ENCODE measurements at regions of chr10 and their contacts with region 1.

Region 1: GRCh38 chr10:6401562-6402348 is 178.3 kb downstream of the PRKCQ start:
- DNase-seq: peak; percentile 71
- ATAC-seq: peak; percentile 83
- H3K4me3 Mint-ChIP-seq: peak overlapping the region; percentile 1
- H3K27ac Mint-ChIP-seq: no peak overlapping the region
- H3K4me1 Mint-ChIP-seq: peaks cover 37% of the 10 kb centered on the region
- H3K27me3 Mint-ChIP-seq: peaks cover 4% of the 10 kb centered on the region
- CTCF ChIP-seq: peak; percentile 67

Region 2: GRCh38 chr10:6128591-6129251 is 273.0 kb before region 1 on chr10:
- CTCF ChIA-PET with region 1: interaction called, 10 read pairs
- POLR2A ChIA-PET with region 1: no interaction called
- intact Hi-C with region 1: no loop called
- DNase-seq: no peak
- ATAC-seq: no peak
- H3K4me3 Mint-ChIP-seq: no peak overlapping the region
- H3K27ac Mint-ChIP-seq: no peak overlapping the region
- H3K4me1 Mint-ChIP-seq: peaks cover 35% of the 10 kb centered on the region
- H3K27me3 Mint-ChIP-seq: peaks cover 3% of the 10 kb centered on the region
- CTCF ChIP-seq: no peak

Region 3: GRCh38 chr10:6171881-6172695 is 229.7 kb before region 1 on chr10:
- CTCF ChIA-PET with region 1: interaction called, 19 read pairs
- POLR2A ChIA-PET with region 1: no interaction called
- intact Hi-C with region 1: no loop called
- DNase-seq: peak; percentile 32
- ATAC-seq: no peak
- H3K4me3 Mint-ChIP-seq: no peak overlapping the region
- H3K27ac Mint-ChIP-seq: no peak overlapping the region
- H3K4me1 Mint-ChIP-seq: peaks cover 88% of the 10 kb centered on the region
- H3K27me3 Mint-ChIP-seq: no peaks in the 10 kb centered on the region
- CTCF ChIP-seq: no peak

Region 4: DNA sequence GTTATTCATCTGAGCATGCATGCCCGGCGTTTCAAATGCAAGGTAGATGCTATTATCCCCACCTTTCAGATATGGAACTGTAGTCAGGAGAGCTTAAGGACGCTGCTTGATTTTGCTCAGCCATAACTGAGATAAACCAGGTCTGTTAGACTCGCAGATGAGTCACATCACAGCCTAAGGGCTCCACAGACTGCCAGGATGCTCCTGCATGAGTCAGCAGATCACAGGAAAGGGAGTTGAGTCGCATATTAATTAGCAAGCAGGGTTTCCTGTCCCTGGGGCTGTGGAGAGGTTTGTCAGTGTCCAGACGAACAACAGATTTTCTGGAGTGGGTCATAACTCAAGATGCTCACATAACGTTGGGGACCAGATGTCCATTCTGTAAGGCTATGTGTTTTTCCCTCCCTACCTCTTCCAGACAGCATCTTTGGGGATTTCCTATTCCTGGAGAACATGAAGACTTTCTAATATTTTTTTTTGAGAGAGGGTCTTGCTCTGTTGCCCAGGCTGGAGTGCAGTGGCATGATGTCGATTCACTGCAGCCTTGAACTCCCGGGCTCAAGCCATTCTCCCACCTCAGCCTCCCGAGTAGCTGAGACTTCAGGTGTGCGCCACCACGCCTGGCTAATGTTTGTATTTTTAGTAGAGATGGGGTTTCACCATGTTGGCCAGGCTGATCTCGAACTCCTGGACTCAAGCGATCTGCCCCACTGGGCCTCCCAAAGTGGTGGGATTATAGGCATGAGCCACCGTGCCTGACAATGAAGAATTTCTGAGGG is 162.4 kb before region 1 on chr10:
- CTCF ChIA-PET with region 1: interaction called, 24 read pairs
- POLR2A ChIA-PET with region 1: interaction called, 3 read pairs
- intact Hi-C with region 1: no loop called
- DNase-seq: peak; percentile 87
- ATAC-seq: peak; percentile 93
- H3K4me3 Mint-ChIP-seq: no peak overlapping the region
- H3K27ac Mint-ChIP-seq: peak overlapping the region; percentile 16
- H3K4me1 Mint-ChIP-seq: peaks cover 19% of the 10 kb centered on the region
- H3K27me3 Mint-ChIP-seq: no peaks in the 10 kb centered on the region
- CTCF ChIP-seq: no peak

Region 5: GRCh38 chr10:6300106-6300783 is 101.5 kb before region 1 on chr10:
- CTCF ChIA-PET with region 1: interaction called, 11 read pairs
- POLR2A ChIA-PET with region 1: no interaction called
- intact Hi-C with region 1: no loop called
- DNase-seq: peak; percentile 61
- ATAC-seq: peak; percentile 67
- H3K4me3 Mint-ChIP-seq: peak overlapping the region; percentile 52
- H3K27ac Mint-ChIP-seq: peak overlapping the region; percentile 88
- H3K4me1 Mint-ChIP-seq: peaks cover 43% of the 10 kb centered on the region
- H3K27me3 Mint-ChIP-seq: no peaks in the 10 kb centered on the region
- CTCF ChIP-seq: no peak

Region 6: DNA sequence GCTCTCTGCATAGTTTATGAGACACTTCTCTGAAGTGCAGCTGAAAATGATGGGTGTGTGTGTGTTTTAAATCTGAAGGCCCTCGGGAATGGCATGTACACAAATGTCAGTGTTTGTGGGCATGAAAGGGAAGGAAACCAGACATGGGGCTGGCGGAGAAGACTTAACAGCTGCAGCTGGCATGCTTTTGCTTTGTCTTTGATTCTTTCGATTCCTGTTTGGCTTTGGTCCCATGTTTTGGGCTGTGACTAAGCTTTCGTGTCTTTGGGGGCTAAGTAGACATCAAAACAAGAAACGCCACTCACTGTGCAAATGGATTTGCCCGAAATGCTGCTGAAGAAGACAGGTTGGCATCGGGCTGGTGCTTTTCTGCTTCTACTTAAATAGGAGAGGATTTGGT is 19.7 kb before region 1 on chr10:
- CTCF ChIA-PET with region 1: interaction called, 29 read pairs
- POLR2A ChIA-PET with region 1: interaction called, 5 read pairs
- intact Hi-C with region 1: no loop called
- DNase-seq: peak; percentile 69
- ATAC-seq: peak; percentile 91
- H3K4me3 Mint-ChIP-seq: peak overlapping the region; percentile 54
- H3K27ac Mint-ChIP-seq: peak overlapping the region; percentile 53
- H3K4me1 Mint-ChIP-seq: peaks cover 24% of the 10 kb centered on the region
- H3K27me3 Mint-ChIP-seq: no peaks in the 10 kb centered on the region
- CTCF ChIP-seq: no peak

Region 7: DNA sequence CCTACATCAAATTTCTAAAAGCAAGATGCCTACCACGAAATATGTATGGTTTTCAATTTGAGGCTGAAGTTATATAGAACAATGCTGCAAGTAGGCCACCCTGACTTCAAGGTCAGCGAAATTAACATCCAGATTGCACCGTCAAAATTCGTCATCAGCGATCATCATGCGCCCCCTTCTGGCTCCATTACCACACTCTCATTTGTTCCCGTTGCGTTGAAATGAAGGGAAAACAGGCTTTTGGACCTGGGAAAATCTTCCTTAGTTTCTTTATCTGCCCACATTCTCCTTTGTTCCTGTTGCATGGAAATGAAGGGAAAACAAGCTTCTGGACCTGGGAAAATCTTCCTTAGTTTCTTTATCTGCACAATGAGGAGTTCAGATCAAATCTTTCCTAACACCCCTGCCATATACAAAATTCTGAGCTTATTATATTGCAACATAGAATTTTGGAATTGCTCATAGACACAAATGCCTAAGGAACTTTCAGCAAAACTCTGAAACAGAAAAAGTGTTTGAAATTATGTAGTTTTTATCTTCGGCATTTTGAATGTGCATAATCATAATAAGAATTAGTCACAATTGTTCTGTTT is 276.6 kb after region 1 on chr10:
- CTCF ChIA-PET with region 1: interaction called, 11 read pairs
- POLR2A ChIA-PET with region 1: no interaction called
- intact Hi-C with region 1: no loop called
- DNase-seq: peak; percentile 80
- ATAC-seq: peak; percentile 47
- H3K4me3 Mint-ChIP-seq: no peak overlapping the region
- H3K27ac Mint-ChIP-seq: no peak overlapping the region
- H3K4me1 Mint-ChIP-seq: peaks cover 4% of the 10 kb centered on the region
- H3K27me3 Mint-ChIP-seq: peaks cover 17% of the 10 kb centered on the region
- CTCF ChIP-seq: peak; percentile 80

Measured in activated CD8-positive, alpha-beta T cell treated with anti-CD3 and anti-CD28 coated beads for 36 hours (primary cell).